ENCODE measurements at regions of chr1 and their contacts with region 1.

Region 1: GRCh38 chr1:33295450-33296081 is 25.3 kb downstream of the A3GALT2 start:
- DNase-seq: peak; percentile 59 to 97
- H3K4me3 ChIP-seq: no peak overlapping the region
- H3K27ac ChIP-seq: no peak overlapping the region
- H3K4me1 ChIP-seq: peaks cover 0 to 6% (median 0%) of the 10 kb centered on the region in 4 experiments; a peak in 3 of 7 replicates
- H3K27me3 ChIP-seq: no peaks in the 10 kb centered on the region
- CTCF ChIP-seq: peak; percentile 89 to 94 (median 90)
- EP300 ChIP-seq: no peak
- POLR2A ChIP-seq: no peak
- RAD21 ChIP-seq: peak; percentile 84 to 85

Region 2: GRCh38 chr1:33080885-33081553 is 214.5 kb before region 1 on chr1 and contains the start of gene AZIN2:
- CTCF ChIA-PET with region 1: no interaction called
- POLR2A ChIA-PET with region 1: no interaction called
- DNase-seq: peak; percentile 80 to 100
- H3K4me3 ChIP-seq: peak within 1 kb of the TSS; percentile 43 to 63 (median 58)
- H3K27ac ChIP-seq: no peak within 1 kb of the TSS
- H3K4me1 ChIP-seq: peaks cover 0 to 5% (median 4%) of the 10 kb centered on the region in 4 experiments; a peak in 4 of 7 replicates
- H3K27me3 ChIP-seq: peaks cover 10 to 48% (median 37%) of the 10 kb centered on the region in 4 experiments
- CTCF ChIP-seq: no peak
- EP300 ChIP-seq: no peak
- POLR2A ChIP-seq: peak in 1 of 2 experiments; percentile 64; a peak in 2 of 3 replicates
- RAD21 ChIP-seq: peak in 1 of 2 experiments; percentile 15; a peak in 1 of 4 replicates
- total RNA-seq, gene AZIN2: 0.21 and 0.22 TPM in 2 replicates

Region 3: GRCh38 chr1:33268927-33269610 is 26.5 kb before region 1 on chr1:
- CTCF ChIA-PET with region 1: interaction called, 49 read pairs
- POLR2A ChIA-PET with region 1: no interaction called
- DNase-seq: no peak
- H3K4me3 ChIP-seq: no peak overlapping the region
- H3K27ac ChIP-seq: no peak overlapping the region
- H3K4me1 ChIP-seq: peaks cover 0 to 8% (median under 1%) of the 10 kb centered on the region in 4 experiments; a peak in 3 of 7 replicates
- H3K27me3 ChIP-seq: no peaks in the 10 kb centered on the region
- CTCF ChIP-seq: no peak
- EP300 ChIP-seq: no peak
- POLR2A ChIP-seq: no peak
- RAD21 ChIP-seq: no peak

Region 4: GRCh38 chr1:33306648-33307493 is 11.3 kb after region 1 on chr1:
- CTCF ChIA-PET with region 1: interaction called, 50 read pairs
- POLR2A ChIA-PET with region 1: no interaction called
- DNase-seq: peak in 1 of 2 experiments; percentile 67
- H3K4me3 ChIP-seq: peak overlapping the region; percentile 7 to 55 (median 18); a peak in 6 of 8 replicates
- H3K27ac ChIP-seq: no peak overlapping the region
- H3K4me1 ChIP-seq: peaks cover 0 to 9% (median 3%) of the 10 kb centered on the region in 4 experiments; a peak in 5 of 7 replicates
- H3K27me3 ChIP-seq: peaks cover 11 to 23% (median 21%) of the 10 kb centered on the region in 4 experiments
- CTCF ChIP-seq: no peak
- EP300 ChIP-seq: no peak
- POLR2A ChIP-seq: no peak
- RAD21 ChIP-seq: no peak

Region 5: DNA sequence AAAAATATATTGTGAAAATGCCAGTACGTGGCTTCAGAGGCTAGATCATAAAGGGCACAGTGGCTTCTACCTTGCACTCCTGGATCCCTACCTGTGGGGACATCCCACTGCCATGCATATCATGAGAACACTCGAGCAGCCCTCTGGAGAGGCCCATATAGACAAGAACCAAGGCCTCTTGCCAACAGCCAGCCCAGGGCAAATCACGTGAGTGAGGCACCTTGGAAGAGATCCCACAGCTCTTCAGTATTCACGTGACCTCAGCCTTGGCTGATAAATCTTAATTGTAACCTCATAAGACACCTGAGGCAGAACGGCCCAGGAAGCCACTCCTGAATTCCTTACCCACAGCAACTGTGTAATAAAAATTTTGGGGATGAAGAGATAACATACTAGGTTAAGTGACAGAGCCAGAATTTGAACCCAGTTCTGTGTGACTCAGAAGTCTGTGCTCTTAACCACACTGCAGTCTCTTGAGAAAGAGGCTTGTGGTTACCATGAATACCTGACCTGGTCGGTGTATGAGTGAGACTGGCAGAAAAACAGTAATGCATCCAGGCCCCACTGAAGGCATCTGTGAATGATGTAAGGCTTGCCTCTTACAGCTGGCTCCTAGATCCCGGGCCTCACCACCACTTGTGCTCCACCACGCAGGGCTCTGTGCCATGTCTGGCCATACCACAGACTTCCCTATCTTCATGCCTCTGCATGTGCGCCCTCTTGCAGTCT is 32.2 kb after region 1 on chr1:
- CTCF ChIA-PET with region 1: interaction called, 36 read pairs
- POLR2A ChIA-PET with region 1: no interaction called
- DNase-seq: no peak
- H3K4me3 ChIP-seq: no peak overlapping the region
- H3K27ac ChIP-seq: no peak overlapping the region
- H3K4me1 ChIP-seq: 0 out of 7 replicates have a peak, but pooled peaks cover 0 to 3% (median 0%) of the 10 kb centered on the region in 4 experiments
- H3K27me3 ChIP-seq: no peaks in the 10 kb centered on the region
- CTCF ChIP-seq: no peak
- EP300 ChIP-seq: no peak
- POLR2A ChIP-seq: no peak
- RAD21 ChIP-seq: no peak

Region 6: DNA sequence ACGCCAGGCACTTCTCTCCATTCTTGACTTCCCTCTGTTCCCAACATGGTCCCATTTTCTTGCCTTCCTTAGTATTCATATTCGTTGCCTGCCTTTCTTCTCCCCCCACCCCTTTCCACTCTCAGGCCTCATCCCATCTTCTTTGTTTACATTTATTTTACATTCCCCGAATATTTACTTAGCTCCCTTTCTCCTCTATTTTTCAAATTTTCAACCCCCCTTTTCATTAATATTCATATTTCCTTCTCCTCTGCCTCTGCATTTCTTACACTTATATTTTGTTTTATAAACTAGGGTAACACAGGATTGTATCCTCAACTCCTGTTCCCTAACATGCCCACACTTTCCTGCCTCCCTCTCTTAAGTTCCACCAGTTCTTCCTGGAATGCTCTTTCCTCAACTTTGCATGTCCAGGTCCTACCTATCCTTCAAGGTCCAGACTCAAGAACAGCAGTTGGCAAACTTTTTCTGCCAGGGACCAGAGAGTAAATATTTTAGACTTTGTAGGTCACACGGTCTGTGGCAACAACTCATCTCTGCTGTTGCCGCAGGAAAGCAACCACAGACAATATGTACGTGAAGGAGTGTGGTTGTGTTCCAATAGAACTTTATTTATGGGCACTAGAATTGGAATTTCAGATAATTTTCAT is 55.2 kb after region 1 on chr1:
- CTCF ChIA-PET with region 1: interaction called, 10 read pairs
- POLR2A ChIA-PET with region 1: no interaction called
- DNase-seq: no peak
- H3K4me3 ChIP-seq: peak overlapping the region; percentile 27 to 68 (median 50); a peak in 7 of 8 replicates
- H3K27ac ChIP-seq: no peak overlapping the region
- H3K4me1 ChIP-seq: peaks cover 4 to 25% (median 12%) of the 10 kb centered on the region in 4 experiments
- H3K27me3 ChIP-seq: peaks cover 50 to 94% (median 82%) of the 10 kb centered on the region in 4 experiments
- CTCF ChIP-seq: no peak
- EP300 ChIP-seq: no peak
- POLR2A ChIP-seq: no peak
- RAD21 ChIP-seq: no peak

Region 7: DNA sequence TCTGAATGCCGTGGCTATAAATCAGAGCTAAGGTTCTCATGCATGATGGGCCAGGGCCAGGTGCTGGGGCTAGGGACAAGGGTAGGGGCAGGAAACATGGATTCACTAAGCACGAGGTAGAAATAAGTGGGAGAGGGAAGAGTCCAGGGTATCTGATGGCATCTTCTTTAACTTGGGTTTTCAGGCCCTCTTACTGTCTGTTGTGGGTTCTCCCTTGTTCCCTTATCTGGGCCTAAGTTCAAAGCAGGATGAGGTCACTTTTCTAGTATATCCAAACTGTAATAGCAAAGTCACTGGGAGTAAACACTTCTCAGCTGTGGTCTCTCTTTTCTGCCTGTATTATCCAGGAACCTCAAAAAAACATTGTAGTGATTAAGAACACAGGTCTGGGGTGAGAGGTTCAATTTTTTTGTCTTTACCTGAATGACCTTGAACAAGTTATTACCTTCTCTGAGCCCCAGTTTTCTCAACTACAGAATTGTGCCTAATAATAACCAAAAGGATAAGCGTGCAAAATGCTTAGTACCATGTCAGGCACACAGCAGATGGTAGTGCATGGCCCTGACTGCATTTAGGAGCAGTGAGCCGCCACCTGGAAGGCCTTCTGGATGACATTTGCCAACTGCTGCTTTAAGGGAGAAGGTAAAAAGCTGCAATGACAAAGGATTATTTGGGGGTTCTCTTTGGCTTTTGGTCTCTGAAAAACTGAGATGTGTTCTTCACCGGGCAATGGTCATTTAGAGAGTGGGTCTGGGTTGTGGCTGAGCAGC is 79.0 kb after region 1 on chr1:
- CTCF ChIA-PET with region 1: interaction called, 180 read pairs
- POLR2A ChIA-PET with region 1: no interaction called
- DNase-seq: no peak
- H3K4me3 ChIP-seq: no peak overlapping the region
- H3K27ac ChIP-seq: no peak overlapping the region
- H3K4me1 ChIP-seq: peaks cover 0 to 7% (median 4%) of the 10 kb centered on the region in 4 experiments; a peak in 4 of 7 replicates
- H3K27me3 ChIP-seq: no peaks in the 10 kb centered on the region
- CTCF ChIP-seq: no peak
- EP300 ChIP-seq: no peak
- POLR2A ChIP-seq: no peak
- RAD21 ChIP-seq: no peak

Region 8: DNA sequence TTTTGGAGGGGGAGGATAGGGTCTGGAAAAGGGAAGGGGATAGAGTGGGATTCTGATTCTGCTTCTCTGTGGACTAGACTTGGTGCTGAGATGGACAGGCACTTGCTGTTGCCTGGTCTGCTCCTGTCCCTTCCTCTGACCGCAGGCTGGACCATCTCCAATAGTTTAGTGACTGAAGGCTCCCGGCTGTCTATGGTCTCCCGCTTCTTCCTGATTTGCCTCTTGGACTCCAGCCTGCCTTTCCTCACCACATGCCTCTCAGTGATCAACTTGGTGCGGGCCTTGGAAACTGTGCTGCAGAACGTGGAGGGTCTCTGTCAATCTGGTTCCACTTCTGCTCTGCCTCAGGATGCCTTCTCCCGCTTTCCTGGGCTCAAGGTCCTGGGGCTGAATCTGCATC is 170.6 kb after region 1 on chr1:
- CTCF ChIA-PET with region 1: interaction called, 60 read pairs
- POLR2A ChIA-PET with region 1: no interaction called
- DNase-seq: no peak
- H3K4me3 ChIP-seq: no peak overlapping the region
- H3K27ac ChIP-seq: no peak overlapping the region
- H3K4me1 ChIP-seq: peaks cover 0 to 4% (median 0%) of the 10 kb centered on the region in 4 experiments; a peak in 1 of 7 replicates
- H3K27me3 ChIP-seq: no peaks in the 10 kb centered on the region; a peak in 1 of 7 replicates
- CTCF ChIP-seq: no peak
- EP300 ChIP-seq: no peak
- POLR2A ChIP-seq: no peak
- RAD21 ChIP-seq: no peak